ENCODE measurements at regions of chr6 and their contacts with region 1.

Region 1: GRCh38 chr6:53410508-53411258 is 61.9 kb upstream of the ELOVL5 start:
- DNase-seq: no peak
- H3K4me3 ChIP-seq: no peak overlapping the region
- H3K27ac ChIP-seq: no peak overlapping the region
- H3K4me1 ChIP-seq: peaks cover 0 to 2% (median 0%) of the 10 kb centered on the region in 4 experiments; a peak in 1 of 7 replicates
- H3K27me3 ChIP-seq: no peaks in the 10 kb centered on the region
- CTCF ChIP-seq: peak; percentile 69 to 76 (median 71)
- EP300 ChIP-seq: no peak
- POLR2A ChIP-seq: no peak
- RAD21 ChIP-seq: peak; percentile 76 to 80

Region 2: DNA sequence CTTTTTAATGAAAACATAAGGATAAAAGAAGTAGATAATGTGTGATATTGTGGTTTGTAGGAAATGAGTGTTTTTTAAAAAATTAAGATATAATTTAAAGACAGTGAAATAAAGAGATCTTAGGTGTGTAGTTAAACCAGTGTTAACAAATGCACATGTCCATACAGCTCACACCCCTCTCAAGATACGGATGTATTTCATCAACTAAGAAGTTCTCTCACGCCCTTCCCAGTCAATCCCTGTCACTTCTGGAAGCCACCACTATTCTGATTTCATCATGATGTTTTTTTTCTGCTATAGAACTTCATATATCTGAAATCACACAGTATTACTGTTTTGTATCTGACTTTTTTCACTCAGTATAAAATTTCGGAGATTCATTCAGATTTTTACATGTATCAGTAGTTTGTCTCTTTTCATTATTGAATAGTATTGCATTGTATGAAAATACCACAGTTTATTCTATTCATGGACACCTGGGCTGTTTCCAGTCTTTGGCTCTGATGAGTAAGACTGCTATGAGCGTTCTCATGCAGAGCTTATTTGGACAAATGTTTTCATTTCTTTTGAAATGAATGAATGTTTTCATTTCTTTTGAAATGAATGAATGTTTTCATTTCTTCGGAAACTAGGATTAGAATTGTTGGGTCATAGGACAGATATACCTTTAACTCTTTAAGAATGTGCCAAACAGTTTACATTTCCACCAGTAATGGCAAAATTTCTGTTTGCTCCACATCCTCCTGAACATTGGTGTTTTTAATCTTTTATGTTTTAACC is 12.2 kb before region 1 on chr6:
- CTCF ChIA-PET with region 1: interaction called, 21 read pairs
- POLR2A ChIA-PET with region 1: no interaction called
- DNase-seq: no peak
- H3K4me3 ChIP-seq: no peak overlapping the region
- H3K27ac ChIP-seq: no peak overlapping the region
- H3K4me1 ChIP-seq: no peaks in the 10 kb centered on the region
- H3K27me3 ChIP-seq: no peaks in the 10 kb centered on the region
- CTCF ChIP-seq: no peak
- EP300 ChIP-seq: no peak
- POLR2A ChIP-seq: no peak
- RAD21 ChIP-seq: no peak